ENCODE measurements at regions of chr1 and their contacts with region 1.

Region 1: GRCh38 chr1:31955917-31956736 is 18.0 kb upstream of the PTP4A2 start:
- DNase-seq: peak; percentile 91
- ATAC-seq: peak; percentile 84 to 91
- H3K4me3 ChIP-seq: no peak overlapping the region
- H3K27ac ChIP-seq: peak overlapping the region; percentile 92 to 99 (median 95)
- H3K4me1 ChIP-seq: peaks cover 48 to 49% of the 10 kb centered on the region in 2 donors
- H3K27me3 ChIP-seq: no peaks in the 10 kb centered on the region
- CTCF ChIP-seq: peak in 2 of 5 experiments; percentile 21 to 41
- POLR2A ChIP-seq: peak; percentile 61 to 88

Region 2: DNA sequence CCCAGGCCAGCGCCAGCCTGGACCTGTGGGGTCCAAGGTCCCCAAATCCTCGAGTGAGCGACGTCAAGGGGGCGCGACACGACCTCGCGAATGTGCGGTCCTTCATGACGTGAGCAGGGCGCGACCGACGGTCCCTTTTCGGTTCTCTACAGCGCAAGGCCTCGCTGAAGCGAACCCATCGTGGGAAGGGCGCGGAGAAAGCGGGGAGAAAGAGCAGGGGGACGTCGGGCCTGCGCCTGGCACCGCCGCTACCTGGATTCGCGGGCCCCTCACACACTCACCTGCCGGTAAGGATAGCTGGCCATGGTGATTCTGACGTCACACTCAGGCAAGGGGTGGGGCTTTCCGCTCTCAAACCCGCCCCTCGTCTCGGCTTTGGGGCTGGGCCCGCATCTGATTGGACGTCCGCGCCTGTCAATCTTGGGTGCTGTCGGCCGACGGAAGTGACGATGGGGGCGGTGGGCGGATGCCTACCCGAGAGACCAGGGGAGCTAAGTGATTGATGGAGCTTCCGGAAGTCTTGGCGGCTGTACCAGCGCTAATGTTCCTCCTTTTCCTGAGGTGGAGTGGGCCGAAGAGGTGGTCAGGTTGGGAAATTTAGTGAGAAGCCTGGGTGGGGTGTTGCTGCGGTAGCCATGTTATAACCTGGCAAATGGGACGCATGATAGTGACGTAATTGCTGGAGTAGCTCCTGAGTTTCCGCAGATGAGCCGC is 311.4 kb before region 1 on chr1 and contains the start of gene PEF1:
- in situ Hi-C with region 1: no loop called
- intact Hi-C with region 1: loop called (anchors 10 kb)
- DNase-seq: peak; percentile 98 to 99
- ATAC-seq: peak; percentile 87 to 90
- H3K4me3 ChIP-seq: peak within 1 kb of the TSS; percentile 72 to 96 (median 79)
- H3K27ac ChIP-seq: peak within 1 kb of the TSS; percentile 87 to 99 (median 96)
- H3K4me1 ChIP-seq: peaks cover 48 to 54% of the 10 kb centered on the region in 2 donors
- H3K27me3 ChIP-seq: no peaks in the 10 kb centered on the region
- CTCF ChIP-seq: peak in 2 of 5 experiments; percentile 26 to 35
- POLR2A ChIP-seq: peak; percentile 77 to 80
- total RNA-seq, gene PEF1: 29.5 to 53.1 (median 42.7) TPM

Region 3: GRCh38 chr1:31689821-31690220 is 266.3 kb before region 1 on chr1:
- in situ Hi-C with region 1: no loop called
- intact Hi-C with region 1: no loop called
- DNase-seq: no peak
- ATAC-seq: no peak
- H3K4me3 ChIP-seq: no peak overlapping the region
- H3K27ac ChIP-seq: no peak overlapping the region
- H3K4me1 ChIP-seq: no peaks in the 10 kb centered on the region
- H3K27me3 ChIP-seq: no peaks in the 10 kb centered on the region
- CTCF ChIP-seq: no peak
- POLR2A ChIP-seq: no peak

Region 4: DNA sequence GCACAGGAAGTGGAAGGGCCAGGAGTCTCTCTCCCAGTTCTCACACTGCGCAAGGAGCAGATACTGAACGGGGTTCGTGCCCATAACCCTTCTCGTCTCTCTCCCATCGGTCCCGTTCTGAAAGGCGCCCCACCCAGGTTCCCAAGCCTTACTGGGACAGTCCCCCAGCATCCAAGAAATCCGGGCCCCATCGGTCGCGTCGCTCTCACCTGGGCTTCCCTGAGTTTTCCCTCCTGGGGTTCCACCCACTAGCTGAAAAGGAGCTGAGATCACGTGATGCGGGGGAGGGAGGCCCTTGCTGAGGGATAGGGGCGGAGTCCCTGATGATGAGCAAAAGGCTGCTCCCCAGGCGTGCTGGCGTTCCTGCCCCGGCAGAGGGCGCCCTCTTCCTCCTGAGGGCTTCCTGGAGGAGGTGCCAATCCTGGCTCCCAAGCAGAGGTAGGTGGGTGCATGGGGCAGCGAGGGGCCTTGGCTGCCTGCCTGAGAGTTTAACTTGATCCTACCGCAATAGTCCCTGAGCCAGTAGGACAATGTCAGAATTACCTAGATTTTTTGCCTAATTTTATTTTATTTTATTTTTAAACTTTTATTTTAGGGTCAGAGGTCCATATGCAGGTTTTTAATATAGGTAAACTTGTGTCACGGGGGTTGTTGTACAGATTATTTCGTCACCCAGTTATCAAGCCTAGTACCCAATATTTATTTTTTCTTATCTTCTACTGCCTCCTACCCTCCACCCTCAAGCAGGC is 140.2 kb before region 1 on chr1 and contains the start of gene SPOCD1:
- in situ Hi-C with region 1: loop called in 2 of 4 experiments (anchors 10 to 25 kb)
- intact Hi-C with region 1: loop called (anchors 5 kb)
- DNase-seq: peak; percentile 34 to 67
- ATAC-seq: peak; percentile 52 to 64
- H3K4me3 ChIP-seq: no peak within 1 kb of the TSS
- H3K27ac ChIP-seq: no peak within 1 kb of the TSS
- H3K4me1 ChIP-seq: no peaks in the 10 kb centered on the region
- H3K27me3 ChIP-seq: no peaks in the 10 kb centered on the region
- CTCF ChIP-seq: peak; percentile 47 to 73 (median 63)
- POLR2A ChIP-seq: no peak
- total RNA-seq, gene SPOCD1: not detected

Region 5: GRCh38 chr1:31897526-31898100 is 58.5 kb before region 1 on chr1:
- in situ Hi-C with region 1: no loop called
- intact Hi-C with region 1: no loop called
- DNase-seq: no peak
- ATAC-seq: no peak
- H3K4me3 ChIP-seq: no peak overlapping the region
- H3K27ac ChIP-seq: no peak overlapping the region
- H3K4me1 ChIP-seq: no peaks in the 10 kb centered on the region
- H3K27me3 ChIP-seq: no peaks in the 10 kb centered on the region
- CTCF ChIP-seq: no peak
- POLR2A ChIP-seq: no peak

Region 6: DNA sequence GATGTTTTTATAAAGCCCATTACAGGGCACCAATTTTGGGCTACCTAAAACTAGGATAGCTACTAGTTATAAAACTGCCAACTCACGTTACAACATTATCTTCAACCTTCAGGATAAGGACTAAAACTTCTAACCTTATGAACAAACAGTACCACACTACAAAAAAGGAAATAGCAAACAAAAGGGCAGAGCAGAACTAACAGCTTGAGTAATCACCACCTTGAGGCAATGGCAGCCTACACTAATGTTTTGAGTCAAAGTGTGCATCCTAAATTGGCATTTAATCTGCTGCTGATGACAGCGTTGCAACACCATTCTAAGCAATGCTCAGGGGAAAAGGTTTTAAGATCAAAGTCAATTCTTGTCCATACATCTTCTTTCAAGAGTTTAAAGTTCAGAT is 45.2 kb before region 1 on chr1:
- in situ Hi-C with region 1: no loop called
- intact Hi-C with region 1: loop called (anchors 10 kb)
- DNase-seq: no peak
- ATAC-seq: peak in 1 of 2 donors; percentile 30
- H3K4me3 ChIP-seq: no peak overlapping the region
- H3K27ac ChIP-seq: peak overlapping the region; percentile 0 to 20 (median 9)
- H3K4me1 ChIP-seq: peaks cover 39 to 40% of the 10 kb centered on the region in 2 donors
- H3K27me3 ChIP-seq: no peaks in the 10 kb centered on the region
- CTCF ChIP-seq: no peak
- POLR2A ChIP-seq: no peak

Region 7: GRCh38 chr1:31938174-31938950 is 17.8 kb before region 1 on chr1 and contains the start of gene PTP4A2:
- in situ Hi-C with region 1: no loop called
- intact Hi-C with region 1: loop called (anchors 2 kb)
- DNase-seq: peak; percentile 91 to 94
- ATAC-seq: peak; percentile 76 to 78
- H3K4me3 ChIP-seq: peak within 1 kb of the TSS; percentile 81 to 91 (median 84)
- H3K27ac ChIP-seq: peak within 1 kb of the TSS; percentile 97 to 99 (median 98)
- H3K4me1 ChIP-seq: peaks cover 43 to 51% of the 10 kb centered on the region in 2 donors
- H3K27me3 ChIP-seq: no peaks in the 10 kb centered on the region
- CTCF ChIP-seq: peak in 4 of 5 experiments; percentile 82 to 93 (median 88)
- POLR2A ChIP-seq: peak; percentile 99 to 100
- total RNA-seq, gene PTP4A2: 294 to 522 (median 353) TPM

Measured in gastrocnemius medialis (tissue), 4 donors.